ENCODE measurements at regions of chr1 and their contacts with region 1.

Region 1: DNA sequence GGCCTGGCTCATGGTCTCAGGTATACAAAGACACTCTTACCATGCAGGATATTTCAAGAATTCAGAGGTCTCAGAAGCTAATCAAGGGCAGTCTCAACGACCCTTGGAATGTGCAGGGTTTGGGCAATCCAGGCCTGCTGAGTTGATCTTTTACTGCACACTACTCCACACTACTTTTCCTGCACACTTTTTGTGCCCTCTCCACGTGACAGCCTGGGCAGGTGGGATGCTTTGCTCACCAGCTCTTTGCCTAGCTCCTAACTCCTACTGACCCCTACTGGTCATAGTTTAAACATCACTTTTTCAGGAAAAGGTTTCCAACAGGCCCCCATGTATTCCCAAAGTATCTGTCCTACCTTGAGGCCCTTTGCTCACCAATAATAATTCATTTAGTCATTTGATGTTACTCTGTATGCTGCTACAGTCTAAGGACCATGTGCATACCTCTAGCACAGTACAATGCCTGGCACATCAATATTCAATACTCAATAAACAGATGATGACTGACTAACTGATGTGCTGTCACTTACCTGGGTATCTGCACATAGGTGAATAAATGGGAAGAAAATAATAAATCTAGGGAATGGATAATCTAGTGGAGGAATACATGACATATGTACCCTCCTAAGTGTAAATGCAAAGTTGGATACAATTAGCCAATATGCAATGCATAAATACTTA is 9.6 kb downstream of the DUSP23 start:
- DNase-seq: peak; percentile 52
- H3K4me3 ChIP-seq: no peak overlapping the region; a peak in 1 of 4 replicates
- H3K27ac ChIP-seq: no peak overlapping the region
- H3K4me1 ChIP-seq: peaks cover 0 to 14% of the 10 kb centered on the region in 2 experiments; a peak in 2 of 4 replicates
- H3K27me3 ChIP-seq: peaks cover 10% of the 10 kb centered on the region; the same call in 1 of the 2 replicates
- CTCF ChIP-seq: peak; percentile 67
- EP300 ChIP-seq: no peak
- RAD21 ChIP-seq: peak; percentile 69

Region 2: DNA sequence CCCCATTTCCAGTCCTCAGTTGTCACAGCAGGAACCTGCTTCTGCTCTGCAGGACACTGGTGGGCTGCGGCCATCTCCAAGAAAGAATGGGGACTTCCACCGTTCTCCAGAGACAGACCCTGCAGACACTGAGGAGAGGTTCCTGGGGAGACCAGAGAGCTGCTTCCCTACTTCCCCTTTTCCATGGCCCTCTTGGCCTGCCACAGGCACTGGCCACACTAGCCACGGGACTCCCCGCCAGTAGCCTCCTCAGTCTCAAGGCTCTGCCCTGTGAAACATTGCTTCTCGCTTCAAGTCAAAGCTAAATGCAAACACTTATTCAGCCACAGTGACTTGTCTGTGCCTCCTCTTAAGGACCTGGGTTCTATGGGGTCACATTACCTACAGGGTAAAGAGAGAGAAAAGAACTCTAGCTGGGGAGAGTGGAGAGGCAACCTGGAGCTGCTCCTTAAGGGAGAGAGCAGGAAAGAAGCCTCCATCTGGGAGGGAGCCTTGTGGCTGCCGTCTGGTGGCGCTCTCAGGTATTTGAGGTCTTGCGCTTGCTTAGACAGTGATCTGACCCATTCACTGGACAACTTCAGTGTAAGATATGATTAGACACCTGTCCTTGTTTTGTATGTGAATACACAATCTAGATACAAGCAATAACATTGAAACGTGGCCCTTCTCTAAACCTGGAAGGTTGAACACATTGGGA is 30.9 kb after region 1 on chr1:
- CTCF ChIA-PET with region 1: interaction called, 84 read pairs
- POLR2A ChIA-PET with region 1: no interaction called
- DNase-seq: peak; percentile 53
- H3K4me3 ChIP-seq: no peak overlapping the region
- H3K27ac ChIP-seq: no peak overlapping the region
- H3K4me1 ChIP-seq: peaks cover 0 to 24% of the 10 kb centered on the region in 2 experiments; a peak in 1 of 4 replicates
- H3K27me3 ChIP-seq: no peaks in the 10 kb centered on the region
- CTCF ChIP-seq: peak; percentile 65
- EP300 ChIP-seq: no peak
- RAD21 ChIP-seq: peak; percentile 55